GM12878 (cell line): ENCODE measurements at regions of chr18 and their contacts with region 1.

Region 1: DNA sequence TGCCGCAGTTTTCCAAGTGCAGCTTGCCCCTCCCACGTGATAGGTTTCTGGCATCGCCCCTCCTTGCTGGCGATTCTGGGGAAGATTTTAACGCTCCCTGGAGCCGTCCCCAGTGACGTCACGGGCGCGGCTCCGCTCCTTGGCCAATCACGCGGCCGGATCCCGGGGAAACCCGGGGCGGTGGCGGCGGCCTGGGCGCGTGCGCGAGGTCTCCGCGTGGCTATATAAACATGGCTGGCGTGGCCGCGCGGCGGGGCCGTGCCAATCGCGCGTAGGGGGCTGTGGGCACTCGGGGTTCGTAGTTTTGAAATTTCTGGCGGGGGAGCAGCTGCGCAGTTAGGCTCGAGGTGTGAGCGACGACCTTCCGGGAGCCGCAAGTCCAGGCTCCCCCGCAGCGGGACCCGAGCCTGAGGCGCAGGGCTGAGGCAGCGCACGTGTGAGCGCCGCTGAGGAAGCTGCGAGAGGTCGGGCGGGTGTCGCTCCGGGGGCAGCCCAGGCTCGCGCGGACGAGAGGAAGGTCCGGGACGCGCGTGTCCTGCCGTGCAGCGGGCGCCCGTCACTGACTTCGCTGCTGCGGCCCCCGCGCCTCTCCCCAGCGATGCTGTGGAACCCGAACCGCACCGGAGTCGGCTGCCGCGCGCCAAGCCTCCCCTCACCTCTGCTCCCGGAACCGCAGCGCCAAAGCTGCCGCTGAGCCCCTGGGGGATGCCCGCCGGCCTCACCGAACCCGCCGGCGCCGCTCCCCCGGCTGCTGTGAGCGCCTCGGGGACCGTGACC is at the start of gene TAF4B:
- DNase-seq: peak; percentile 68
- ATAC-seq: peak; percentile 84
- H3K4me3 ChIP-seq: peak within 1 kb of the TSS; percentile 72
- H3K27ac ChIP-seq: peak within 1 kb of the TSS; percentile 54
- H3K4me1 ChIP-seq: no peaks in the 10 kb centered on the region
- H3K27me3 ChIP-seq: no peaks in the 10 kb centered on the region
- CTCF ChIP-seq: no peak
- EP300 ChIP-seq: no peak
- POLR2A ChIP-seq: peak; percentile 88
- RAD21 ChIP-seq: no peak
- polyA plus RNA-seq, gene TAF4B: 2.3 to 4.4 TPM

Region 2: DNA sequence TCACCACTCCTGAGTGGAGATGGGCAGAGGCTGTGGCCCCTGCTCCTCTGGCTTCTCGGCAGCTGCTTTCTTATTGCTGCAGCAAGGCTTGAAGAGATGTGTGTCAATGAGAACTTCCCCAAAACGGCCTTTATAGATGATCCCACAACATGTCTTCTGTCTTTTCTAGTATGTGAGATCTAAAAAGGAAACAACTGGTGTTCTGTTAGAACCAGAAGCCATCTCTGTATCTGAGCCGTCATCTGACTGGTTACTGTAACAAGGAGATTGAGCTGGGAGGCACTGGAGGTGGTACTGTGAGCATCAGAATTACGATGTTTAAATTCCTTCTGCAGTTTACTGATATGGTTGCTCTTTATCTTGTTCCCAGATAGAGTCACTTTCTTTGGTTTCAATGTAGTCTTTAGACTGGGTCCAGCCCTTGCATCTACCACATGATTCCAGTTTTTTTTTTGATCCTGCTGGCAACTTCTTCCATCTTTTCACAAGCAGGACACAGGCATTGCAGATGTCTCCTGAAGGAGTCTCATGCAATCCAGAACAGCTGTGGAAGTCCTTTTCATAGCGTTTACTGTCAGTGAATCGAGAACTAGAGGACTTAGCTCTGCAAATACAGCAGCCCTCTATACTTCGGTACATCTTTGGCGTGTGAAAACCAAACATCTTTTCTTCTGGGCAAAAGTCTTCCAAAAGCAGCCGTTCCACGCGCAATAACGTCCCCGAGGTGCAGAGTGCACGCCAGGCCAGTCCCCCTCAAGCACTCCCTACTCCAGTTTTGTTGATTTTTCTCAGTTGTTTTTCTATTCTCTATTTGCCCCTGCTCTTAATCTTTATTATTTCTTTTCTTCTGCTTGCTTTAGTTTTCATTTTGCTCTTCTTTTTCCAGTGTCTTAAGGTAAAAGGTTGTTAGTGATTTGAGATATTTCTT is 29.5 kb after region 1 on chr18:
- CTCF ChIA-PET with region 1: interaction called, 4 read pairs
- POLR2A ChIA-PET with region 1: no interaction called
- RAD21 ChIA-PET with region 1: interaction called, 3 read pairs
- SMC1A ChIA-PET with region 1: interaction called, 3 read pairs
- in situ Hi-C with region 1: no loop called
- intact Hi-C with region 1: loop called (anchors 2 kb)
- DNase-seq: no peak
- ATAC-seq: peak; percentile 72
- H3K4me3 ChIP-seq: peak overlapping the region; percentile 22; the same call in 1 of the 2 replicates
- H3K27ac ChIP-seq: no peak overlapping the region
- H3K4me1 ChIP-seq: 0 out of 2 replicates have a peak, but pooled peaks cover 4% of the 10 kb centered on the region
- H3K27me3 ChIP-seq: no peaks in the 10 kb centered on the region
- CTCF ChIP-seq: no peak
- EP300 ChIP-seq: no peak
- POLR2A ChIP-seq: no peak
- RAD21 ChIP-seq: no peak

Region 3: DNA sequence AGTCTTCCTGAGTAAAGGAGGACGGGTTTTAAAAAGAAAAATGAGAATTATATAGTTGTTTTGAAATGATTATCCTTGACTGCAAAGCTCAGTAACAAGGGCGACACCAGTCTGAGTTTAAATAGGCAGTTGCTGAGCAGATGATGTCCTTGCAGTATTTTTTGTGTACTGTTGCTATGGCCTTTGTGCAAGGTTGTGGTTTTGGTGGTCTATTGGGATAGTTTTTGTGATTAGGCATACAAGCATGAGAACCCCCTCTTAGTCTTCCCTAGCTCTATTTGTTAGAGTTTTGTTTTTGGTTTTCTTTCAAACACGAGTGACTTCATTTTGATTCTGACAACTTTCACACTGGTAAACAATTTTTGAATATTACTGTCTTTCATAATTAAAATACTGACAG is 64.0 kb after region 1 on chr18:
- CTCF ChIA-PET with region 1: no interaction called
- POLR2A ChIA-PET with region 1: interaction called, 4 read pairs
- RAD21 ChIA-PET with region 1: no interaction called
- SMC1A ChIA-PET with region 1: no interaction called
- in situ Hi-C with region 1: no loop called
- intact Hi-C with region 1: loop called (anchors 5 kb)
- DNase-seq: no peak
- ATAC-seq: peak; percentile 78
- H3K4me3 ChIP-seq: no peak overlapping the region
- H3K27ac ChIP-seq: no peak overlapping the region
- H3K4me1 ChIP-seq: no peaks in the 10 kb centered on the region
- H3K27me3 ChIP-seq: no peaks in the 10 kb centered on the region
- CTCF ChIP-seq: no peak
- EP300 ChIP-seq: no peak
- POLR2A ChIP-seq: no peak
- RAD21 ChIP-seq: no peak